Activated T-helper 1 cell treated with anti-CD3 and anti-CD28 coated beads, Interleukin-12 subunit alpha, Interleukin-12 subunit beta, Interleukin-2, Interleukin-4 antibody, amounts not matched to agents 30 ng/mL and 10 ng/mL and 1 ng/mL, durations not matched to agents 14 hours and 24 hours and 36 hours (primary cell): ENCODE measurements at regions of chr15 and their contacts with region 1.

Region 1: GRCh38 chr15:52018693-52019387 is at the start of gene MAPK6:
- DNase-seq: peak; percentile 91
- H3K4me3 Mint-ChIP-seq: peak within 1 kb of the TSS; percentile 98
- H3K27ac Mint-ChIP-seq: peak within 1 kb of the TSS; percentile 99
- H3K4me1 Mint-ChIP-seq: peaks cover 46% of the 10 kb centered on the region
- H3K27me3 Mint-ChIP-seq: peaks cover 7% of the 10 kb centered on the region
- total RNA-seq, gene MAPK6: 57.3 and 57.9 TPM in 2 replicates

Region 2: DNA sequence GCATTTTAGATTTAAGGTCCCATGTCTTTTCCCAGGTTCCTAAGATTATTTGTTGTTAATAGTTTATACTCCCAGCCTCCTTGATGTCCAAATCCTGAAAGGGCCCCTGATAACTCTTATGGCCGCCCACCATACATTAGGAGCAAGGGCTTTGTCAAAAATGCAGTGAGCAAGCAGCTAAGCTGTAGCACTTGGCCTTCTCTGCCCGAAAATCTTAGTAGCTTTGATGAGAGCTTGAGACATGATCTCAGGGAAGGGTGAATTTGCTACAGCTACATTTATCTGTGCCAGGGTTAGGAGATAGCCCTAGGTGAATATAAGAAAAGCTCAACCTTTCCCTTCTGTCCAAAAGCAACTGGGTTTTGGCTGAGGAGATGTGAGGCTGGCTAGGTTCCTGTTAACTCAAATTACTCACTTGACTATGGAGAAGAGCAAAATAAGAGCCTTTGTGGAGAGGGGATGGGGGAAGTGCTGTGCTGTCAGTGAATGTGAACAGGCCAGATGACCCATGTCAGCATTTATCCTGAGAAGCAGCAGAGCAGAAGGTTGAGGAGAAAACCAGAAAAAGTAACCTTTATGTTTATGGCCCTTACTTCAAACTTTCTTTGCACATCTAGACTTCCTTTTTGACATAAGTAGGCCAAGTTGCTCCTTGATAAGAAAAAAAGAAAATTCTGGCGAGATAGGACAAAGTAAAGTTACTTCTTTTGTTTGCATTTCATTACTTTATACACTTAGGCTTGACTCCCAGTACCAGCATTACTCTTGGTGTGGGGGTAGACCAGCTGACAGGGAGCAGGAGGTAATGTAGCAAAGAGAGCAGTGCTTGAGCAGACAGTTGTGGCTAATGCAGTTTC is 21.3 kb after region 1 on chr15:
- intact Hi-C with region 1: loop called (anchors 1 kb)
- DNase-seq: no peak
- H3K4me3 Mint-ChIP-seq: no peak overlapping the region
- H3K27ac Mint-ChIP-seq: peak overlapping the region; percentile 4
- H3K4me1 Mint-ChIP-seq: peaks cover 54% of the 10 kb centered on the region
- H3K27me3 Mint-ChIP-seq: no peaks in the 10 kb centered on the region

Region 3: GRCh38 chr15:53072025-53072471 is 1053.2 kb after region 1 on chr15:
- intact Hi-C with region 1: no loop called
- DNase-seq: no peak
- H3K4me3 Mint-ChIP-seq: no peak overlapping the region
- H3K27ac Mint-ChIP-seq: no peak overlapping the region
- H3K4me1 Mint-ChIP-seq: no peaks in the 10 kb centered on the region
- H3K27me3 Mint-ChIP-seq: no peaks in the 10 kb centered on the region